ENCODE measurements at regions of chr1 and their contacts with region 1.

Region 1: DNA sequence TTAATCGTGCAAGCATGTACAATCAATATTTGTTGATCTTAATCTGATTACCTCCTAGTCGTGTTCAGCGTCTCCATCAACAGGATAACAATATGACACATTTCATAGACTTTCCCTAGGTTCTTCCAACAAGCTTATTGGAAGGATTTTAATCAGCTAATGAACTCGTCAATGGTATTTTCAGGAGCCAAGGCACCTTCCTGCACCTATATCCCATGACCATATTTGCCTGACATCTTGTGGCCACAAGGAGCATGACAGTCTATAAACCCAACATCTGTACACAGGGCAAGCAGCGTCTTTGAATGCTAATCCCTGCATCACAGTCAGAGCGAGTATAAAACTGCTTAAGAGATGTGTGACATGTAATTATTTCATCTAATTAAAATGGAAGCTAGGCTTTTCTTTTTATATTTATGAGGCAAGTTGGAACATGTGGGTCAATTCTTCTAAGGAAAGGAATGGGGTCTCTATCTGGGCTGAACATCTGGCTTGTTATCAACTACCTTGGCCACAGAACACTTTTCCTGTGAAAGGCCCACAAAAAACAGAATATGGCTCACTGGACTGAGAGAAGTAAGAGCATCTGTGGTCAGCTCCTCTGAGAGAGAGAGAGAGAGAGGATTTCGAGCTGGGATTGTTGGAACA is 388.8 kb downstream of the NTNG1 start:
- DNase-seq: no peak
- ATAC-seq: peak; percentile 87
- H3K4me3 ChIP-seq: no peak overlapping the region
- H3K27ac ChIP-seq: no peak overlapping the region
- H3K4me1 ChIP-seq: no peaks in the 10 kb centered on the region
- H3K27me3 ChIP-seq: no peaks in the 10 kb centered on the region
- CTCF ChIP-seq: peak; percentile 75

Region 2: GRCh38 chr1:107277022-107277421 is 252.6 kb before region 1 on chr1:
- intact Hi-C with region 1: loop called (anchors 10 kb)
- DNase-seq: no peak
- ATAC-seq: peak; percentile 39
- H3K4me3 ChIP-seq: no peak overlapping the region
- H3K27ac ChIP-seq: no peak overlapping the region
- H3K4me1 ChIP-seq: no peaks in the 10 kb centered on the region
- H3K27me3 ChIP-seq: no peaks in the 10 kb centered on the region
- CTCF ChIP-seq: peak; percentile 44

Measured in upper lobe of right lung (tissue), 1 donor.